Thyroid gland (tissue), 4 donors: ENCODE measurements at regions of chr2 and their contacts with region 1.

Region 1: DNA sequence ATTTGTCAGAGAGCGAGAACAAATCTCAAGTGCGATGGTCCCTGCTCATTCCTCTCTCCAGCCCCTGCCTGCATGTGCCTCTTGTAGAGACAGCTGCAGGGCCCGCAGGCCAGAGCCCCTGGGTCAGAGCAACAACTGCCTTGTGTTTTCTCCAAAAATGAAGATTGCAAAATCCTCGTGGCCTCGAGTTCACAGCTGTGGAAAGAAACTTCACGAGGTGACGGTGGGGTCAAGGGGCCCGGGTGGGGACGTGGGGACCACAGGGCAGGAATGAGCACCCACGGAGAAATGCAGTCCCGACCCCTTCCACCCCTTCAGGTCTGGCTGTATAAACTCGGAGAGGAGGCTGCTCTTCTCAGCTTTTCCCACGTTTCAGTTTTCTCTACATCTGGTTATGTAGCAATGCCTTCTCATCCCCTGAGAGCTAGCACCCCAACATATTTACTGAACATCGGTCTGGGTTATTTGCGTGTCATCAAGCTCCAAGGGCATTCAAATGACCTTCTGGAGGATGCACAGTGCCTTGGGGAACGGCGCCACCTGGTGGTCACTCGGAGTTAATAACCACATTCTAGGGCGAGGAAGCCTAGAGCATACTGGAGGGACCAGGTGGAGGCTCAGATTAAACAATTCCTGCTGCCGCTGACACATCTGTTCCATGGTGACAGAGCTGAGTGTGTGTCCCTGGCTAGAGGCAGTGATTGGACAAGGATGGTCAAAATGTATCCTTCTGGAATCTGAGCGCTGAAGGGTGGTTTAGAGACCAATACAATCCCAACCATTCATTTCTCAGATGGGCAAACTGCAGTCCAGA is 91.4 kb upstream of the CYRIA start:
- DNase-seq: peak; percentile 85 to 86
- H3K4me3 ChIP-seq: no peak overlapping the region
- H3K27ac ChIP-seq: peak overlapping the region; percentile 71 to 86 (median 77)
- H3K4me1 ChIP-seq: peaks cover 22 to 29% of the 10 kb centered on the region in 2 donors
- H3K27me3 ChIP-seq: no peaks in the 10 kb centered on the region
- CTCF ChIP-seq: peak; percentile 79 to 98 (median 93)
- POLR2A ChIP-seq: no peak

Region 2: GRCh38 chr2:16348821-16349515 is 408.1 kb before region 1 on chr2:
- intact Hi-C with region 1: no loop called
- DNase-seq: no peak
- H3K4me3 ChIP-seq: no peak overlapping the region
- H3K27ac ChIP-seq: no peak overlapping the region
- H3K4me1 ChIP-seq: no peaks in the 10 kb centered on the region
- H3K27me3 ChIP-seq: no peaks in the 10 kb centered on the region
- CTCF ChIP-seq: no peak
- POLR2A ChIP-seq: no peak

Region 3: GRCh38 chr2:16553226-16553625 is 203.8 kb before region 1 on chr2:
- intact Hi-C with region 1: loop called (anchors 5 kb)
- DNase-seq: peak; percentile 18 to 35
- H3K4me3 ChIP-seq: no peak overlapping the region
- H3K27ac ChIP-seq: no peak overlapping the region
- H3K4me1 ChIP-seq: no peaks in the 10 kb centered on the region
- H3K27me3 ChIP-seq: no peaks in the 10 kb centered on the region
- CTCF ChIP-seq: peak in 5 of 6 experiments; percentile 18 to 57 (median 49)
- POLR2A ChIP-seq: no peak

Region 4: GRCh38 chr2:16613539-16614011 is 143.5 kb before region 1 on chr2:
- intact Hi-C with region 1: loop called (anchors 5 kb)
- DNase-seq: no peak
- H3K4me3 ChIP-seq: no peak overlapping the region
- H3K27ac ChIP-seq: peak overlapping the region; percentile 78 to 90 (median 84)
- H3K4me1 ChIP-seq: peaks cover 51 to 62% of the 10 kb centered on the region in 2 donors
- H3K27me3 ChIP-seq: no peaks in the 10 kb centered on the region
- CTCF ChIP-seq: peak; percentile 18 to 87 (median 64)
- POLR2A ChIP-seq: no peak

Region 5: DNA sequence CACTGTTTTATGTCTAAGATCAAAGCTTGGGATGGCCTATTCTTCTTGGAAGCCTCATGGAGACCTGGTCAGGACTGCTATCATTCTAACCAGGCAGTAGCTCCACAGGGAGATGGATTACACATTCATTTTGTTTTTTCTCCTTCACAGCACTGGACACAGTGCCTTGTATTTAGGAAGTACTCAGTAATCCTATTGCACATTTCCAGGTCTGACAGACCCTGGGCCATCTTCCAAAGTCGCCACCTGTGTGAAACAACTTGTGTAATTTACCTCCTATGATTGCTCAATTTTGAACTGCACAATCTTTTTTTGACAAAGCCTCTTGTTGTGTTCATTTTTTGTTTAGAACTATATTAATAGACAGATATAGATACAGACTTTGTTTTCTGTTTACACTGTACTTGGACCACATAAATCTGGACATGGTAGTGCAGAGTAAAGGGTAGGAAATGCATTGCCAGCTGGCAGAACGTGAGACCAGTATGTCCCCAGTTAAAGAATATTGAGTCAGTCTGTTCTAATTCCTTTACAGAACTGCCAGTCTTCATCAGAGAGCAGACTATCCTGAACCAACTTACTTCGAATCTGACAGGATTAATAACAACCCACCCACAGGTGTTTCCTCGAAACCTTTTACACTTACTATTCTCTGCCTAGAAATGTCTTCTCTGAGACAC is 186.4 kb after region 1 on chr2:
- intact Hi-C with region 1: no loop called
- DNase-seq: no peak
- H3K4me3 ChIP-seq: no peak overlapping the region
- H3K27ac ChIP-seq: no peak overlapping the region
- H3K4me1 ChIP-seq: no peaks in the 10 kb centered on the region
- H3K27me3 ChIP-seq: no peaks in the 10 kb centered on the region
- CTCF ChIP-seq: no peak
- POLR2A ChIP-seq: no peak